ENCODE measurements at regions of chr13 and their contacts with region 1.

Region 1: GRCh38 chr13:106917673-106918556 is 350.0 kb upstream of the ARGLU1 start:
- DNase-seq: peak; percentile 61 to 75
- H3K4me3 ChIP-seq: peak overlapping the region in 2 of 3 donors; percentile 59 to 82
- H3K27ac ChIP-seq: peak overlapping the region; percentile 63 to 83 (median 77)
- H3K4me1 ChIP-seq: peaks cover 3 to 11% of the 10 kb centered on the region in 2 donors
- H3K27me3 ChIP-seq: no peaks in the 10 kb centered on the region
- CTCF ChIP-seq: peak; percentile 68 to 92 (median 83)
- POLR2A ChIP-seq: no peak

Region 2: GRCh38 chr13:106619688-106620555 is 298.0 kb before region 1 on chr13:
- intact Hi-C with region 1: loop called (anchors 10 kb)
- DNase-seq: peak; percentile 34 to 52
- H3K4me3 ChIP-seq: no peak overlapping the region
- H3K27ac ChIP-seq: no peak overlapping the region
- H3K4me1 ChIP-seq: no peaks in the 10 kb centered on the region
- H3K27me3 ChIP-seq: no peaks in the 10 kb centered on the region
- CTCF ChIP-seq: peak; percentile 54 to 83 (median 71)
- POLR2A ChIP-seq: no peak

Region 3: GRCh38 chr13:107124129-107124718 is 206.3 kb after region 1 on chr13:
- intact Hi-C with region 1: loop called (anchors 10 kb)
- DNase-seq: no peak
- H3K4me3 ChIP-seq: no peak overlapping the region
- H3K27ac ChIP-seq: no peak overlapping the region
- H3K4me1 ChIP-seq: no peaks in the 10 kb centered on the region
- H3K27me3 ChIP-seq: no peaks in the 10 kb centered on the region
- CTCF ChIP-seq: peak in 3 of 6 experiments; percentile 47 to 71 (median 56)
- POLR2A ChIP-seq: no peak